HepG2 (cell line): ENCODE measurements at regions of chr6 and their contacts with region 1.

Region 1: GRCh38 chr6:43506667-43507471 is 3.3 kb downstream of the LRRC73 start:
- DNase-seq: peak; percentile 76
- ATAC-seq: peak; percentile 71
- H3K4me3 ChIP-seq: no peak overlapping the region; a peak in 1 of 6 replicates
- H3K27ac ChIP-seq: no peak overlapping the region
- H3K4me1 ChIP-seq: peaks cover 47% of the 10 kb centered on the region
- H3K27me3 ChIP-seq: peaks cover 3 to 7% of the 10 kb centered on the region in 2 experiments; a peak in 4 of 5 replicates
- CTCF ChIP-seq: peak; percentile 98
- EP300 ChIP-seq: no peak
- POLR2A ChIP-seq: no peak
- RAD21 ChIP-seq: peak; percentile 92

Region 2: GRCh38 chr6:43386492-43386891 is 120.4 kb before region 1 on chr6:
- CTCF ChIA-PET with region 1: interaction called, 4 read pairs
- POLR2A ChIA-PET with region 1: no interaction called
- in situ Hi-C with region 1: no loop called
- intact Hi-C with region 1: loop called (anchors 5 kb)
- DNase-seq: peak; percentile 21
- ATAC-seq: no peak
- H3K4me3 ChIP-seq: no peak overlapping the region
- H3K27ac ChIP-seq: no peak overlapping the region
- H3K4me1 ChIP-seq: no peaks in the 10 kb centered on the region
- H3K27me3 ChIP-seq: peaks cover 0 to 29% of the 10 kb centered on the region in 2 experiments; a peak in 4 of 5 replicates
- CTCF ChIP-seq: peak; percentile 38
- EP300 ChIP-seq: no peak
- POLR2A ChIP-seq: no peak
- RAD21 ChIP-seq: no peak

Region 3: GRCh38 chr6:43454696-43455530 is 52.0 kb before region 1 on chr6:
- CTCF ChIA-PET with region 1: interaction called, 39 read pairs
- POLR2A ChIA-PET with region 1: interaction called, 11 read pairs
- in situ Hi-C with region 1: no loop called
- intact Hi-C with region 1: loop called (anchors 1 kb)
- DNase-seq: peak; percentile 67
- ATAC-seq: peak; percentile 87
- H3K4me3 ChIP-seq: peak overlapping the region; percentile 54 to 76 (median 66); a peak in 5 of 6 replicates
- H3K27ac ChIP-seq: no peak overlapping the region
- H3K4me1 ChIP-seq: peaks cover 26% of the 10 kb centered on the region
- H3K27me3 ChIP-seq: peaks cover 0 to 5% of the 10 kb centered on the region in 2 experiments; a peak in 3 of 5 replicates
- CTCF ChIP-seq: no peak; the same call in none of the 2 replicates
- EP300 ChIP-seq: no peak
- POLR2A ChIP-seq: peak in 1 of 2 experiments; percentile 33; a peak in 1 of 4 replicates
- RAD21 ChIP-seq: peak; percentile 33

Region 4: DNA sequence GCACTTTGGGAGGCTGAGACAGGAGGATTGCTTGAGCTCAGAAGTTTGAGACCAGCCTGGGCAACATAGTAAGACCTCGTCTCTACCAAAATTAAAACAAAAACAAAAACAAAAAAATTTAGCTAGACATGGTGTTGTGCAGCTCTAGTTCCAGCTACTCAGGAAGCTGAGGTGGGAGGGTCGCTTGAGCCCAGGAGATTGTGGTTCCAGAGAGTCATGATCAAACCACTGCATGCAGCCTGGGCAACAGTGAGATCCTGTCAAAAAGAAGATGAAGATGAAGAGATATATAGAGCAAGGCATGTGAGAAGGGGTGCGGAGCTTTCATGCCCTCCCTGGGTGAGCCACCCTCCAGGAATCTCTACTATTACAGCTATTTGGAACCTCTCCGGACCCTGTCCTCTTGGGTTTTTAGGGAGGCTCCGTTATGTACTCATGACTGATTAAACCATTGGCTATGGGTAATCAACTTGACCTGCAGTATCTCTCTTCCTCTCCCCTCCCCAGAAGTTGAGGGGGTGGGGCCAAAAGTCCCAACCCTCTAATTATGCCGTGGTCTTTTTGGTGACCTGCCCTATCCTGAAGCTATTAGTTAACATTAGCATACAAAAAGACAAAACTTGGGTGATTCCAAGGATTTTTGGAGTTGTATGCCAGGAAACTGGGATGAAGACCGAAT is 78.2 kb after region 1 on chr6:
- CTCF ChIA-PET with region 1: no interaction called
- POLR2A ChIA-PET with region 1: no interaction called
- in situ Hi-C with region 1: no loop called
- intact Hi-C with region 1: no loop called
- DNase-seq: no peak
- ATAC-seq: no peak
- H3K4me3 ChIP-seq: no peak overlapping the region
- H3K27ac ChIP-seq: no peak overlapping the region
- H3K4me1 ChIP-seq: no peaks in the 10 kb centered on the region
- H3K27me3 ChIP-seq: no peaks in the 10 kb centered on the region
- CTCF ChIP-seq: no peak
- EP300 ChIP-seq: no peak
- POLR2A ChIP-seq: no peak
- RAD21 ChIP-seq: no peak